IMR-90 (cell line): ENCODE measurements at regions of chr1 and their contacts with region 1.

Region 1: GRCh38 chr1:27858072-27858958 is 14.0 kb upstream of the THEMIS2 start:
- DNase-seq: peak; percentile 77
- ATAC-seq: peak; percentile 94
- H3K4me3 ChIP-seq: no peak overlapping the region
- H3K27ac ChIP-seq: no peak overlapping the region
- H3K4me1 ChIP-seq: peaks cover 5% of the 10 kb centered on the region
- H3K27me3 ChIP-seq: no peaks in the 10 kb centered on the region
- CTCF ChIP-seq: peak; percentile 98
- POLR2A ChIP-seq: peak; percentile 48; the same call in 1 of the 2 replicates
- RAD21 ChIP-seq: peak; percentile 99

Region 2: GRCh38 chr1:26907071-26907917 is 951.0 kb before region 1 on chr1:
- CTCF ChIA-PET with region 1: no interaction called
- POLR2A ChIA-PET with region 1: no interaction called
- dilution Hi-C with region 1: no loop called
- in situ Hi-C with region 1: no loop called
- intact Hi-C with region 1: no loop called
- DNase-seq: peak; percentile 92
- ATAC-seq: peak; percentile 96
- H3K4me3 ChIP-seq: no peak overlapping the region
- H3K27ac ChIP-seq: no peak overlapping the region
- H3K4me1 ChIP-seq: no peaks in the 10 kb centered on the region
- H3K27me3 ChIP-seq: peaks cover 10% of the 10 kb centered on the region
- CTCF ChIP-seq: no peak
- POLR2A ChIP-seq: no peak
- RAD21 ChIP-seq: no peak

Region 3: GRCh38 chr1:27318596-27318995 is 539.7 kb before region 1 on chr1:
- CTCF ChIA-PET with region 1: no interaction called
- POLR2A ChIA-PET with region 1: no interaction called
- dilution Hi-C with region 1: no loop called
- in situ Hi-C with region 1: no loop called
- intact Hi-C with region 1: no loop called
- DNase-seq: peak; percentile 22
- ATAC-seq: no peak
- H3K4me3 ChIP-seq: no peak overlapping the region
- H3K27ac ChIP-seq: no peak overlapping the region
- H3K4me1 ChIP-seq: peaks cover 4% of the 10 kb centered on the region
- H3K27me3 ChIP-seq: no peaks in the 10 kb centered on the region
- CTCF ChIP-seq: no peak
- POLR2A ChIP-seq: no peak
- RAD21 ChIP-seq: no peak

Region 4: DNA sequence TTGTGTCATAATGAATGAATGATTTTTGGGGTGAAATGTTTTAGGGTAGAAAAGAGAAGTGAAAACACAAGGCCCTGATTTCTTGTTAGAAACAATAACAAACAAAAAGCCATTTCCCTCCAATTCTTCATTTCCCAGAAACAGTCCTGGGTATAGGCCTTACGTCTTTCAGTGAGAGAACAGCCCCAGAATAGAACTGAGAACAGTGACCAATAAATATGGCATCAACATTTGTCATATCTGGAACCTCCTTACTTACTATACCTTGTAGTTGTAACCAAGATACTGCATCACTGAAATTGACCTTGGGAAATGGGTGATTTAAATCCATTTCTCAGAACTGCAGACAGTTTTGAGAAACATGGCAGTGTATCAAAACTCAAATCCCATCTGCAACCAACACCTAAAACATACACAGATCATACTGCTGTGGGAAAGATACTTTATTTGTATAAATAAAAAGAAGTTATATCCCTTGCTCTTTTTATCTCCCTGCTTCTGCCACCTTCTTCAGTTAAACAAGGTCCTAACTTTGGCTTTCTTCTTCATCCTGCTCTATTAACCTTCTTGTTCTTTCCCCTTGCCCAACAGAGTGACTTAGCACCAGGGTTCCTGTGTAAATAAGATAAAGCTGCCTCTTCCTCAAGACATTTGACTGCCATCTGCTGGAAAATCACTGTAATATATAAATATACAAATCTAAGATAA is 121.0 kb after region 1 on chr1:
- CTCF ChIA-PET with region 1: interaction called, 6 read pairs
- POLR2A ChIA-PET with region 1: no interaction called
- dilution Hi-C with region 1: no loop called
- in situ Hi-C with region 1: loop called (anchors 5 kb)
- intact Hi-C with region 1: loop called (anchors 1 kb)
- DNase-seq: peak; percentile 81
- ATAC-seq: peak; percentile 91
- H3K4me3 ChIP-seq: no peak overlapping the region
- H3K27ac ChIP-seq: no peak overlapping the region
- H3K4me1 ChIP-seq: peaks cover 2% of the 10 kb centered on the region
- H3K27me3 ChIP-seq: no peaks in the 10 kb centered on the region
- CTCF ChIP-seq: peak; percentile 73
- POLR2A ChIP-seq: no peak
- RAD21 ChIP-seq: peak; percentile 80

Region 5: DNA sequence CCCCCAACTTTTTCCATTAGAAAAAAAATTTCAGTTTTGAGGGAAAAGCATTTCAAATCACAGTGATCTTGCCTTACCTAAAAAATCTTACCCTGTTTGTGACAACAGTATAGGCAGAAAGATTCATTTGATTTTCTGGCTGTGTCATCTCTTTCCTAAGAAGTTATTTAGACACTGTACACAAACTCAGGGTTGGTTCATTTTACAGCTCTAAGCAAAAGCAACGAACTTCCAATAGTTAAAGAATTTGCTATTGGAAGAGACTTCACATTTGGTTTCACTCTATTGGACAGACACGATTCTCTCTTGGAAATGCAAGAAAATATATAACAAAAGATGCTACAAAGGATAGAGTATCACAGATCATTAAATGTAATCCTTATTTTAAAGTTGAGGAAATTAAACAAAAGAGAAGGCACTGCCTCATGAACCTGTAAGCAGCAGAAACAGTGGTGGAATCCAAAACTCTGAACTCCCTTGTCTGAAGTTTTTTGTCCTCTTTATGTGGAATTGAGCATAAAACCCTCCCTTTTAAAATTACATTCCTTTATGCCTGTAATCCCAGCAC is 209.3 kb after region 1 on chr1:
- CTCF ChIA-PET with region 1: no interaction called
- POLR2A ChIA-PET with region 1: no interaction called
- dilution Hi-C with region 1: no loop called
- in situ Hi-C with region 1: no loop called
- intact Hi-C with region 1: loop called (anchors 5 kb)
- DNase-seq: peak; percentile 57
- ATAC-seq: peak; percentile 73
- H3K4me3 ChIP-seq: no peak overlapping the region
- H3K27ac ChIP-seq: no peak overlapping the region
- H3K4me1 ChIP-seq: peaks cover 3% of the 10 kb centered on the region; the same call in 1 of the 2 replicates
- H3K27me3 ChIP-seq: no peaks in the 10 kb centered on the region
- CTCF ChIP-seq: no peak
- POLR2A ChIP-seq: no peak
- RAD21 ChIP-seq: no peak

Region 6: GRCh38 chr1:28088168-28088961 is 230.1 kb after region 1 on chr1 and contains the start of gene EYA3:
- CTCF ChIA-PET with region 1: interaction called, 3 read pairs
- POLR2A ChIA-PET with region 1: no interaction called
- dilution Hi-C with region 1: no loop called
- in situ Hi-C with region 1: no loop called
- intact Hi-C with region 1: loop called (anchors 5 kb)
- DNase-seq: peak; percentile 98
- ATAC-seq: peak; percentile 98
- H3K4me3 ChIP-seq: peak within 1 kb of the TSS; percentile 76
- H3K27ac ChIP-seq: peak within 1 kb of the TSS; percentile 79
- H3K4me1 ChIP-seq: no peaks in the 10 kb centered on the region; the same call in 1 of the 2 replicates
- H3K27me3 ChIP-seq: no peaks in the 10 kb centered on the region
- CTCF ChIP-seq: no peak
- POLR2A ChIP-seq: peak; percentile 65
- RAD21 ChIP-seq: no peak
- total RNA-seq, gene EYA3: 14.4 and 17.6 TPM in 2 replicates

Region 7: GRCh38 chr1:28208818-28209441 is 350.6 kb after region 1 on chr1:
- CTCF ChIA-PET with region 1: no interaction called
- POLR2A ChIA-PET with region 1: no interaction called
- dilution Hi-C with region 1: no loop called
- in situ Hi-C with region 1: loop called (anchors 25 kb)
- intact Hi-C with region 1: loop called (anchors 10 kb)
- DNase-seq: peak; percentile 76
- ATAC-seq: peak; percentile 97
- H3K4me3 ChIP-seq: no peak overlapping the region
- H3K27ac ChIP-seq: no peak overlapping the region
- H3K4me1 ChIP-seq: no peaks in the 10 kb centered on the region
- H3K27me3 ChIP-seq: no peaks in the 10 kb centered on the region
- CTCF ChIP-seq: peak; percentile 84
- POLR2A ChIP-seq: no peak
- RAD21 ChIP-seq: peak; percentile 97